Endothelial cell of umbilical vein (primary cell): ENCODE measurements at regions of chr11 and their contacts with region 1.

Region 1: DNA sequence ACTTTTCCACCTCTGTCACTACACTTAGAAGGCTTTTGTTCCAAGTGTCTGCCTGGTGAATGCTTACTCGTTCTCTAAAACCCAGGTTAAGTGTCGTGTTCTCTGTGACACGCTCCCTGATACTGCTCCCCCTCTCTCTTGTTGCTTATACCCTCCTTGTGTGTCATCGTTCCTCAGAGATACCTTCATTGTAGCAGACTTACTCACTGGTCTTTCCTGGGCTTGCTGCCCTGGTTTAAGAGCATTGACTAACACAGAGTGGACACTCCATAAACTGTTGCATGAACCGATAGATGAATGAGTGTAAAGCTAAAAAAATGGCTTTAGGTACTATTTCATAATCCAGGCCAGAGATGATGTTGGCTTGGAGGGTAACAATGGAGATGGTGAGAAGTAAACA is 171.3 kb downstream of the GRIK4 start:
- DNase-seq: no peak
- H3K4me3 ChIP-seq: no peak overlapping the region
- H3K27ac ChIP-seq: no peak overlapping the region
- H3K4me1 ChIP-seq: no peaks in the 10 kb centered on the region
- H3K27me3 ChIP-seq: peaks cover 3 to 6% of the 10 kb centered on the region in 2 experiments
- CTCF ChIP-seq: no peak
- POLR2A ChIP-seq: no peak

Region 2: DNA sequence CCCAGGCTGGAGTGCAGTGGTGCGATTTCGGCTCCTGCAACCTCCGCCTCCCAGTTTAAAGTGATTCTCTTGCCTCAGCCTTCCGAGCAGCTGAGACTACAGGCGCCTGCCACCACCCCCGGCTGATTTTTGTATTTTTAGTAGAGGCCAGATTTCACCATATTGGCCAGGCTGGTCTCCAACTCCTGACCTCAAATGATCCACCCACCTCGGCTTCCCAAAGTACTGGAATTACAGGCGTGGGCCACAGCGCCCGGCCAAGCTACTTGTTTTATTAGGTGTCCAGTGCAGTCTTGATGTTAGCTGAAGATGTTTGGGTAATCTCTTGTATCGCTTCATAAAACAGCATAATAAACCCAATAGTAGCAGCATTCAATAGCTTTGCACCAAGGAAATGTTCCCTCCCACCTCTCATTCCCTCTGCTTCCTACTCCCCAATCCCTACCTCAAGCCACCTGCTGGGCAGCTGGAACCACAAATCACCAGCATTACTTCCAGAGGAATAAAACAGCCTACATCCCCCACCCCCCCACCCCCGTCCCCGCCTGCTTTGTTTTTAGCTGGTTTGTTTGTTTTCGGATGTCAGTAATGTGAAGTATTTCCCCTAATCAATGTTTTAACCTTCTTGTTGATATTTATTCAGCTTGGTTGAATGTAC is 182.3 kb before region 1 on chr11:
- CTCF ChIA-PET with region 1: interaction called, 16 read pairs
- POLR2A ChIA-PET with region 1: no interaction called
- dilution Hi-C with region 1: no loop called
- intact Hi-C with region 1: no loop called
- DNase-seq: peak; percentile 10
- H3K4me3 ChIP-seq: no peak overlapping the region
- H3K27ac ChIP-seq: no peak overlapping the region
- H3K4me1 ChIP-seq: peaks cover 4% of the 10 kb centered on the region
- H3K27me3 ChIP-seq: peaks cover 0 to 3% of the 10 kb centered on the region in 2 experiments
- CTCF ChIP-seq: no peak
- POLR2A ChIP-seq: no peak

Region 3: GRCh38 chr11:120517390-120517761 is 165.5 kb before region 1 on chr11:
- CTCF ChIA-PET with region 1: interaction called, 289 read pairs
- POLR2A ChIA-PET with region 1: no interaction called
- dilution Hi-C with region 1: no loop called
- intact Hi-C with region 1: no loop called
- DNase-seq: peak; percentile 20
- H3K4me3 ChIP-seq: no peak overlapping the region
- H3K27ac ChIP-seq: no peak overlapping the region
- H3K4me1 ChIP-seq: peaks cover 4% of the 10 kb centered on the region
- H3K27me3 ChIP-seq: no peaks in the 10 kb centered on the region
- CTCF ChIP-seq: no peak
- POLR2A ChIP-seq: no peak

Region 4: DNA sequence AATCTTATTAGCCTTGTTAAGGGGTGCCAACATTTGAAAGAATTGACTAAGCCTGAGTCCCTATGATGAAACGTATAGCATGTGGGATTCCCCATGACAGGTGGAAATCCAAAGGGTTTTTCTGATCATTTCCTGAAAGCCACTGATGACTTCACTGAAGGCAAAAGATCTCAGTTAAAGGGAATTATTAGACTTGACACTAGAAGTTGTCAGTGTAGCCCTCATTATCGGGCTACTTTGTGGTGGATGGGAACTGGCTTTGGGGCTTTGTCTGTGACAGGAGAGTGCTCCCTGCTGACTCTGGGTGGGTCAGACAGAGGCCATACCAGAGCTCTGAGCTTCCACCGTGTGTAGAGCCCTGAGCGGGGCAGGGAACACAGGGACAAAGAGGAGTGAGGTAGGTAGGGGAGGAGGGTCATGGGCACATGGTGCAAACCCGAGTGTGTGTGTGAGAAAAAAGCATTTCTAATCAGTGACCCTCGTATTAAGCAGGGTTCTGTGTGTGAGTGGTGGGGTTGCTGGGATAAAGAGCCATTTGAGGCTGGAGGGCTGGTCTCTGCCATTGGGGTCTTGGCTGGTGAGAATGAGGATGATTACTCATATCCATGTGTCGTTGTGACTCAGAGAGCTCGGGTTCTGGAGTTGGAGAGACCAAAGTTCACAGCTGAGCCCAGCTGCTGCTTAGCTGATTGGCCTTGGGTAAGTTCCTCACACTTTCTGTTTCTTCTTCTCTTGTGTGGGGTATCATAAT is 70.2 kb before region 1 on chr11:
- CTCF ChIA-PET with region 1: interaction called, 11 read pairs
- POLR2A ChIA-PET with region 1: no interaction called
- dilution Hi-C with region 1: no loop called
- intact Hi-C with region 1: no loop called
- DNase-seq: peak; percentile 57
- H3K4me3 ChIP-seq: no peak overlapping the region
- H3K27ac ChIP-seq: no peak overlapping the region
- H3K4me1 ChIP-seq: peaks cover 10% of the 10 kb centered on the region
- H3K27me3 ChIP-seq: no peaks in the 10 kb centered on the region
- CTCF ChIP-seq: no peak
- POLR2A ChIP-seq: no peak

Region 5: GRCh38 chr11:120710354-120711131 is 27.7 kb after region 1 on chr11:
- CTCF ChIA-PET with region 1: interaction called, 23 read pairs
- POLR2A ChIA-PET with region 1: no interaction called
- dilution Hi-C with region 1: no loop called
- intact Hi-C with region 1: no loop called
- DNase-seq: no peak
- H3K4me3 ChIP-seq: no peak overlapping the region
- H3K27ac ChIP-seq: no peak overlapping the region
- H3K4me1 ChIP-seq: peaks cover 8% of the 10 kb centered on the region
- H3K27me3 ChIP-seq: no peaks in the 10 kb centered on the region
- CTCF ChIP-seq: no peak
- POLR2A ChIP-seq: no peak

Region 6: GRCh38 chr11:120952461-120953434 is 269.9 kb after region 1 on chr11:
- CTCF ChIA-PET with region 1: interaction called, 14 read pairs
- POLR2A ChIA-PET with region 1: no interaction called
- dilution Hi-C with region 1: no loop called
- intact Hi-C with region 1: loop called (anchors 2 kb)
- DNase-seq: peak; percentile 65
- H3K4me3 ChIP-seq: no peak overlapping the region
- H3K27ac ChIP-seq: no peak overlapping the region
- H3K4me1 ChIP-seq: no peaks in the 10 kb centered on the region
- H3K27me3 ChIP-seq: no peaks in the 10 kb centered on the region
- CTCF ChIP-seq: peak; percentile 39 to 77
- POLR2A ChIP-seq: no peak